Cardiac septum (tissue), 1 donor: ENCODE measurements at regions of chrX and their contacts with region 1.

Region 1: GRCh38 chrX:110180176-110180927 is 137.5 kb downstream of the AMMECR1 start:
- DNase-seq: no peak

Region 2: GRCh38 chrX:109902665-109903064 is 277.7 kb before region 1 on chrX:
- intact Hi-C with region 1: no loop called
- DNase-seq: no peak

Region 3: GRCh38 chrX:110241816-110242215 is 61.5 kb after region 1 on chrX:
- intact Hi-C with region 1: loop called (anchors 10 kb)
- DNase-seq: no peak

Region 4: GRCh38 chrX:110317820-110318658 is 137.7 kb after region 1 on chrX and contains the start of gene AMMECR1:
- intact Hi-C with region 1: loop called (anchors 5 kb)
- DNase-seq: peak; percentile 82
- total RNA-seq, gene AMMECR1: 1.5 TPM

Region 5: GRCh38 chrX:110374559-110374958 is 194.2 kb after region 1 on chrX:
- intact Hi-C with region 1: no loop called
- DNase-seq: no peak

Region 6: DNA sequence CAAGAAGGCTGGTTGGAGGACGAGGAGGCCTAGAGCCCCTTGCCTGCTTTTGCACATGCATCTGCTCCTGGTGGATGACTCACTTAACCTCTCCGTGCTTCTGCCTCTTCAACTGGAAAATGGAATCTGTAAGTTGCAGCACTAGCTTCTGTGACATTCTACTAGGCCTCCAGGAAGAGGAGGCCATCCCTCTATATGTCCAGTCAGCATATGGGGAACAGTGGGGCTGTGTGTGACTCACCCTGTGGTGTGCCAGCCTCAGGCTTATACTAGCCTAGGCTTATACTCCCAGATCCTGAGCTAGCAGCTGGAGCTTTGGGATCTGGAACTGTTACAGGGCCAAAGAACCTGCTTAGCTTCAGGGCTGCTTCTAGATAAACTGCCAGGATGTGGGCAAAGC is 214.3 kb after region 1 on chrX:
- intact Hi-C with region 1: no loop called
- DNase-seq: no peak